ENCODE measurements at regions of chr1 and their contacts with region 1.

Region 1: DNA sequence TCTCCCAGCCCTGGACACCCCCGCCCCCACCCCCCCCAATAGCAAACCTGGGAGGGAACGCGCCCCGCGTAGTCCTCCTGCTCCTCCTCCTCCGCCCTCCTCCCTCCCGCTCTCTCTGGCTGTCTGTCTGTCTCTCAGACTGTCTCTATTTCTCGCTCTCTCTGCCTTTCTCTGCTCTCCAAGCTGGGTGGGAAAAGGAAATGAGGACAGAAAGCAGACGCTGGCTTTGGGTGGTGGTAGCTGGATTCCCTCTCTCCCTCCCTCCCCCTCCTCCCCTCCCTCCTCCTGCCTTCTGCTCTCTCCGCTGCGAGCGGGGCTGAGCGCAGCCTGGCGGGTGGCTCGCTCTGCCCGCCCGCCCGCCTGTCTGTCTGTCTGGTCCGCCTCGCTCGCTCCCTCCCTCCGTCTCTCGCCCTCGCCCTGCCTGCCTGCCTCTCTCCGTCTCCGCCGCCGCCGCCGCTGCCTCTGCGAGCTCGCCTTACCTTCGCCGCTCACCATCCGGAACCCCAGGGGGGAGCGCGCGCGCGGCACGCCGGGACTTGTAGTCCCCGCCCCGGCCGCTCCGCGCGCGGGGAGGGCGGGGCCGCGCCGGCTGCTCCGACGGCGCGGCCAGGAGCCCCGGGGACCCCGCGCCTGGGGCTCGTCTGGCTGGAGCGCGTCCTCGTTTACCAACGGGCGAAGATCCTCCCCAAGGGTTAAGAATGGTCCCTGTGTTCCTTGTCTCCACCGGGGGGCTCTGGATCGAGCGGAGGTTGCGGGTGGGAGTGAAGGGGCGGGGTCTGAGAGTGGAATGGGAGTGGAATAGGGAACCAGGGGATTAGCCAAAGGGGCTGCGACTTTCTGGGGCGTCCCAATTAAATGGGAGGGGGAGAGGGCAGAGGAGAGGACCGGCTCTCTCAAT is at the start of gene AHDC1:
- H3K4me3 ChIP-seq: peak within 1 kb of the TSS; percentile 69
- H3K27ac ChIP-seq: peak within 1 kb of the TSS; percentile 72
- H3K4me1 ChIP-seq: peaks cover 20% of the 10 kb centered on the region
- CTCF ChIP-seq: 0 out of 2 replicates have a peak, but pooled peaks have one; percentile 19

Region 2: DNA sequence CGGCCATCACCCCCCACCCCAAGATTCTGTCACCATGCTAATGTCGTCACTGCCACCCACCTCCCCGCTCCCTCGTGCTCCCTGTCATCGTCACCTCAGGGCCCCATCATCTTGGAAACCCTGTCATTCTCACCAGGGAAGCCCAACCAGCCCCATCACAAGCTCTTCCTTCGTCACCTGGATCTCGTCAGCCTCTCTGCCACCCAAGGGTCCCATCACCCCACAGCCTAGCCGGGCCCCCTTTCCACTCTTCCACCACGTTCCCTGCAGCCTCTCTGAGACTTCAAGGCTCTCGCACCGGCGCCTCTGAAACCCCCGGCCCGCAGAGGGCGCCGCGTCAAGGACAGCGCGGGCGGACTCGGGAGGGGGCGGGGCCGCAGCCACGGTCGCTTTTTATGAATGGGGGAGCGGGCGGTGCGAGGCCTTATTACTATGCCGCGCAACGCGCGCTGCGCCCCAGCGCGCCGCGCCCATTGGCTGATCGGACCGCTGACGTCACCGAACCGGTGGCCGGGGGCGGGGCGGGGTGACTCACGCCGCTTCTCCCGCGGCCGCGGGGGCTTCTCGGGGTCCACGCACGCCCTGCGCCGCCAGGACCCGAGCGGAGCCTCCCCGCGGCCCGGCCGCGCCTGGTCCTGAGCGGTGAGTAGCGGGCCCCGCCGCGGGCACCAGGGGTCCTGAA is 211.7 kb before region 1 on chr1 and contains the start of gene GPR3:
- CTCF ChIA-PET with region 1: interaction called, 24 read pairs
- POLR2A ChIA-PET with region 1: interaction called, 7 read pairs
- H3K4me3 ChIP-seq: peak within 1 kb of the TSS; percentile 45
- H3K27ac ChIP-seq: no peak within 1 kb of the TSS
- H3K4me1 ChIP-seq: no peaks in the 10 kb centered on the region
- CTCF ChIP-seq: peak; percentile 83

Region 3: DNA sequence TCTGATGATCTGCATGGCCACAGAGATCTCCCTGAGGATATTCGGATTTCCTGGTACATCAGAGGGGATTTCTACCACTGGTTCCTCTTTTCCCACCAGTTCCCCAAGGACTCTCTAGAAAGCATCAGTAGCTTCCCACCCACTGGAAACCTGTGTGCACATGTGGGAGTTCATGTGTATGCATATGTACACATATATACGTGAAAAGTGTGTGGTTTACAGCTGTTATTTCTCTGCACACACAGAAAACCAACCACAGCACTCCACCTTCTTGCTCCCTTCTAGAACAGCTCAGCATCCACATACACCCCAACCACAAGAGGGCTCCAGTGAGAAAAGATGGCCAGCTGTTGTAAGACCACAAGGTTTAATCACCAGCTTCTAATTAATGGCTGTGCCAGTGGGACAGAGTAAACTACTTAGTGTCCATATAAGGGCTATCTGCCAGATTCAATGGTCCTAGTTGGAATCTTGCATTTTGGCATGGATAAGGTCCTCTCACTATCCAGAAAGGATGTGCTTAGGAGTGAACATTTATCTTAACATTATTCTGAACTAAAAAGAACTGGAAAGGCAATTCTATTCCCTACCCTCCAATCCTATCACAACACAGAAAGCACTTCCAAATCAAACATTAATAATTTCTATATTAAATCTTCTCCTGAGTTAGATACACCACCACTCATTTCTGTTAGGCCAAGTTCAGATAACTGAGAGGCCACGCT is 187.4 kb before region 1 on chr1:
- CTCF ChIA-PET with region 1: interaction called, 37 read pairs
- POLR2A ChIA-PET with region 1: interaction called, 4 read pairs
- H3K4me3 ChIP-seq: no peak overlapping the region
- H3K27ac ChIP-seq: no peak overlapping the region
- H3K4me1 ChIP-seq: no peaks in the 10 kb centered on the region
- CTCF ChIP-seq: no peak

Region 4: GRCh38 chr1:27568300-27569087 is 35.4 kb before region 1 on chr1:
- CTCF ChIA-PET with region 1: interaction called, 32 read pairs
- POLR2A ChIA-PET with region 1: interaction called, 6 read pairs
- H3K4me3 ChIP-seq: peak overlapping the region; percentile 22
- H3K27ac ChIP-seq: no peak overlapping the region
- H3K4me1 ChIP-seq: peaks cover 8% of the 10 kb centered on the region; the same call in 1 of the 2 replicates
- CTCF ChIP-seq: peak; percentile 86

Region 5: GRCh38 chr1:27643701-27644625 is 40.0 kb after region 1 on chr1:
- CTCF ChIA-PET with region 1: interaction called, 15 read pairs
- POLR2A ChIA-PET with region 1: interaction called, 6 read pairs
- H3K4me3 ChIP-seq: no peak overlapping the region
- H3K27ac ChIP-seq: no peak overlapping the region
- H3K4me1 ChIP-seq: no peaks in the 10 kb centered on the region
- CTCF ChIP-seq: peak; percentile 71; the same call in 1 of the 2 replicates

Region 6: DNA sequence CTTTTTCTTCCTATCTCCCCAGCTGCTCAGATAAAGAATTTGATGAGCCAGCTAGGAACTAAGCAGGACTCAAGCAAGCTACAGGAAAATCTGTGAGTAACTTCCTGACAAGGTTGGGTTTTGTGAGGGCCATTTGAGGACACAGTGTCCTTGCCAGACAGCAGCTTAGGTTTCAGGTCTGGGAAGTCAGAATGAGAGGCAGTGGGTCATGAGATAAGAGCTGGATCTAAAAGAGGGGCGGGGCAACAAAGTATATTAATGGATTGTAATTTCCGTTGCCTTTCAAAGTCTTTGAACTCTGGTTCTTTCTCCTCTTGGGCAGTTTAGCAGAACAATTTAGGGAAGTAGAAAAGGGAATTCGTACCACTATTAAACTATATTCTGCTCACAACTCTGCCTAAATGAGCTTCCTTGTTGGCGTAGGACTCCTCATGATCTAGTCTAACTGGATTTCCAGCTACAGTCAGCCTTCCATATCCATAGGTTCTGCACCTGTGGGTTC is 185.7 kb after region 1 on chr1:
- CTCF ChIA-PET with region 1: no interaction called
- POLR2A ChIA-PET with region 1: no interaction called
- H3K4me3 ChIP-seq: no peak overlapping the region
- H3K27ac ChIP-seq: no peak overlapping the region
- H3K4me1 ChIP-seq: peaks cover 5% of the 10 kb centered on the region; the same call in 1 of the 2 replicates
- CTCF ChIP-seq: no peak

Measured in HEK293 (cell line).